ENCODE measurements at regions of chr12 and their contacts with region 1.

Region 1: GRCh38 chr12:6335451-6336078 is 6.3 kb downstream of the TNFRSF1A start:
- DNase-seq: peak; percentile 96
- ATAC-seq: peak; percentile 71
- H3K4me3 Mint-ChIP-seq: no peak overlapping the region
- H3K27ac Mint-ChIP-seq: no peak overlapping the region
- H3K4me1 Mint-ChIP-seq: peaks cover 52% of the 10 kb centered on the region
- H3K27me3 Mint-ChIP-seq: no peaks in the 10 kb centered on the region
- CTCF ChIP-seq: peak; percentile 48

Region 2: GRCh38 chr12:5912437-5913334 is 422.9 kb before region 1 on chr12:
- CTCF ChIA-PET with region 1: no interaction called
- POLR2A ChIA-PET with region 1: no interaction called
- intact Hi-C with region 1: no loop called
- DNase-seq: no peak
- ATAC-seq: no peak
- H3K4me3 Mint-ChIP-seq: no peak overlapping the region
- H3K27ac Mint-ChIP-seq: no peak overlapping the region
- H3K4me1 Mint-ChIP-seq: no peaks in the 10 kb centered on the region
- H3K27me3 Mint-ChIP-seq: peaks cover 6% of the 10 kb centered on the region
- CTCF ChIP-seq: no peak

Region 3: GRCh38 chr12:6323340-6323994 is 12.1 kb before region 1 on chr12:
- CTCF ChIA-PET with region 1: interaction called, 45 read pairs
- POLR2A ChIA-PET with region 1: interaction called, 7 read pairs
- intact Hi-C with region 1: no loop called
- DNase-seq: peak; percentile 55
- ATAC-seq: peak; percentile 75
- H3K4me3 Mint-ChIP-seq: peak overlapping the region; percentile 51
- H3K27ac Mint-ChIP-seq: peak overlapping the region; percentile 89
- H3K4me1 Mint-ChIP-seq: peaks cover 49% of the 10 kb centered on the region
- H3K27me3 Mint-ChIP-seq: no peaks in the 10 kb centered on the region
- CTCF ChIP-seq: peak; percentile 86

Region 4: DNA sequence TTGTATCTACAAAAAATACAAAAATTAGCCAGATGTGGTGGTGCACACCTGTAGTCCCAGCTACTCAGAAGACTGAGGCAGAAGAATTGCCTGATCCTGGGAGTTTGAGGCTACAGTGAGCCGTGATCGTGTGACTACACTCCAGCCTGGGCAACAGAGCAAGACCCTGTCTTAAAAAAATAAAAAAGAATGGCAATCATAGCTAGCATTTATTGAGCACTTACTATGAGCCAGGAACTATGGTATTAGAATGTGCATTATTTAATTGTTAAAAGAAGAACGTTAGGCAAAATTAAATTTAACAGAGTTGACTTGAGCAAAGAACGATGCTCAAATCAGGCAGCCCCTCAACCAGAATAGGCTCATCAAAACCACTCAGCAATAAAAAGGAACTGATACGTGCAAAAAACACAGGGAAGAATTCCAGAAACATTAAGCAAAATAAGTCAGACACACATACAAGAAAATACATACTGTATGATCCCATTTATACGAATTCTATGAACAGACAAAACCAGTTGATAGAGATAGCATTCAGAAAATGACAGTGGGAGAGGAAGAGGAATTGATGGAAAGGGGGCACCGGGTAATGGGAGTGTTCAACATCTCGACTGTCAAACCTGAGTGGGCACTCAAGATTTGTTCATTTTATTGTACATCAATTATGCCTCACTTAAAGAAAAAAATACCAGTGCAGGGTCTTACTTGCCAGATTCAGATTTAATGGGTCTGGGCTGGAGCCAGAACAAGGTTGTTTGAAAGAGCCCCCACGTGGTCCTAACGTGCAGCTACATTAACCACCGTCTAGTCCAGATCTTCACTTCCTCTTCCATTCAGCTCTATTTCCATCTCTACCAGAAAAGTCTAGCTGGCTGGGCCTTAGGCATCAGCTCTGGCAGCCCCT is 31.8 kb after region 1 on chr12:
- CTCF ChIA-PET with region 1: interaction called, 28 read pairs
- POLR2A ChIA-PET with region 1: interaction called, 5 read pairs
- intact Hi-C with region 1: loop called (anchors 5 kb)
- DNase-seq: peak; percentile 70
- ATAC-seq: peak; percentile 67
- H3K4me3 Mint-ChIP-seq: peak overlapping the region; percentile 12
- H3K27ac Mint-ChIP-seq: peak overlapping the region; percentile 80
- H3K4me1 Mint-ChIP-seq: peaks cover 35% of the 10 kb centered on the region
- H3K27me3 Mint-ChIP-seq: no peaks in the 10 kb centered on the region
- CTCF ChIP-seq: peak; percentile 29

Region 5: GRCh38 chr12:6443361-6443983 is 107.9 kb after region 1 on chr12:
- CTCF ChIA-PET with region 1: interaction called, 3 read pairs
- POLR2A ChIA-PET with region 1: interaction called, 14 read pairs
- intact Hi-C with region 1: no loop called
- DNase-seq: peak; percentile 84
- ATAC-seq: peak; percentile 68
- H3K4me3 Mint-ChIP-seq: peak overlapping the region; percentile 93
- H3K27ac Mint-ChIP-seq: peak overlapping the region; percentile 99
- H3K4me1 Mint-ChIP-seq: peaks cover 61% of the 10 kb centered on the region
- H3K27me3 Mint-ChIP-seq: no peaks in the 10 kb centered on the region
- CTCF ChIP-seq: no peak